Astrocyte of the cerebellum (primary cell): ENCODE measurements at regions of chr13 and their contacts with region 1.

Region 1: GRCh38 chr13:30673669-30674521 is 56.2 kb downstream of the USPL1 start:
- DNase-seq: peak; percentile 40
- H3K4me3 ChIP-seq: peak overlapping the region; percentile 44
- CTCF ChIP-seq: peak; percentile 58

Region 2: DNA sequence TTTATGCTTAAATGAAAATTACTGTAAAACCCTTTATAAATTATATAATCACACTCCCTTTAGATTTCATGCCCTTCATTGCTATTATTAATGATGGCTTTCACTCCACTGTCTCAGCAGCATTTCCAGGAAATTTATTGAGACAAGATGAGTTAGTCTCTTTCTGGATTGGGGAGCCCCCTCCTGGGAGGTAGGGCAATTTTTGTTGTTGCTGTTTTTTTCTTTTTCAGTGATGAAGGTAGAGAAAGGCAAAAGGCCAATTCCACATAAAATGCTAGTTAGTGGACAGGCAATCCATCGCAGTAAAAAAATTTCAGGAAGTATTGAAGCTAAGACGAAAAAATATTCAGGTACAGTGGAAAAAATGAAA is 338.7 kb after region 1 on chr13:
- in situ Hi-C with region 1: loop called (anchors 25 kb)
- DNase-seq: no peak
- H3K4me3 ChIP-seq: no peak overlapping the region
- CTCF ChIP-seq: peak; percentile 62